Activated CD4-positive, alpha-beta T cell treated with anti-CD3 and anti-CD28 coated beads, Interleukin-2, amount 10 ng/mL, durations not matched to agents 24 days and 14 days (primary cell): ENCODE measurements at regions of chr11 and their contacts with region 1.

Region 1: DNA sequence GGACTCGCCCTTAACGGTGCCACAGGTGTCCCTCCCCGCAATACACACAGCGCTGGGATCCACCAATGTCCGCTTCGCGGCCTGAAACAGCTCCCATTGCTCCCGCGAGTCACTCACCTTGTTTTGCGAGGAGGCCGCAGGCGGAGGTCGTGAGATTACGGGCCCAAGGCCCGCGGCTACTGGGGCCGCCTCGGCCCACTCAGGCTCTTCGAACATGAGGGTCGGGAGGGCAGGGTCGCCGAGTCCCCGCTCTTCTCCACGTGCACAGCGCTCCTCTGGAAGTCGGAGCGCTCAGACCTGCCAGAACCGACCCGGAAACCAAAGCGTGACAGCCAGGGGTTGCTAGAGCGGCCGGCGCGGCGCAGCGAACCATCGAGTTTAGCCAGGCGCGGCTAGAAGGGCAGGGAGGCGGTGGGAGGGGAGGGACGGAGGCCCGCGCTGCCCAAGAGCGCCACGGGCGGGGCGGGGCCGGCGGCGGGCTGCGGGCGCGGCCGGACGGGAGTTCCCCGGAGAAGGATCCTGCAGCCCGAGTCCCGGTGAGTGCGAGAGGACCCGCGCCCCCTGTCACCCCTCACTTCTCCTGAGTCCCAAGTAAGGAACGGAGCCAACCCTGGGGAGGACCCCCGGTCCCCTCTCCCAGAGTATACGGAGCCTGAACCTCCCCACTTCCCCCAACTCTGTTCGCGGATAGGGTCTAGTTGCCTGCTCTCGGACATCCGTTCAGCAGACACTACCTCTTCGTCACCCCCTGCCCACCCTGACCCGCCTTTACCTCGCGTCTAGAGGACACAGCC is at the starts of genes ILK and RRP8:
- DNase-seq: peak; percentile 96
- H3K4me3 Mint-ChIP-seq: no peak within 1 kb of the TSS
- H3K27ac Mint-ChIP-seq: no peak within 1 kb of the TSS
- H3K4me1 Mint-ChIP-seq: peaks cover 28% of the 10 kb centered on the region
- H3K27me3 Mint-ChIP-seq: no peaks in the 10 kb centered on the region
- total RNA-seq, gene ILK: 89.6 and 92.4 TPM in 2 replicates
- total RNA-seq, gene RRP8: 41.5 and 43.8 TPM in 2 replicates

Region 2: DNA sequence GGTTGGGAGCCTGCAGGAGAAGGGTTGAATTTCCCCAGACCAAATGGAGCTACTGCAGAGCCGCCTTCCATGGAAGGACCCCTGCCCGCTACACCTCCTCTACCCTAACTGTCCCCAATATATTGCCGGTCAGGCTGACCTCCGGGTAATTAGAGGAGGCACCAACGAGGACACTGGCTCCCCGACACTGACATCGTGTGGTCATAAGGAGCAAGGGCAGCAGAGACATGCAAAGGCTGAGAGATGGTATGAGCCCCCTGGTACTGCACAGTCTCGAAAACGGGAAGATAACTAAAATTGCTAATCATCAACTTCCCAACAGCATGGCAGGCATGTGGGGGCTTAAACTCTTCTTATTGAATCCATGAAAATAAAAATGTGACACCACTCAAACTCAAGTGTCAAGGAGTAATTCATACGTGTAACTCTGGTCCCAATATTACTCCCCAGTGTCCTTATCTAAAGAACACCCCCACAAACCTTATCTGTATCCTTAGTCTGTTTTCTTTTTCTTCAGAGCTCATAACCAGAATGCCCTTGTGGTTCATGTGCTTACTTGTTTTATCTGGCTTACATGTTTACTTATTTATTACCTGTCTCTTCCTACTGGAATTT is 287.6 kb before region 1 on chr11:
- intact Hi-C with region 1: loop called (anchors 2 kb)
- DNase-seq: peak; percentile 80
- H3K4me3 Mint-ChIP-seq: no peak overlapping the region
- H3K27ac Mint-ChIP-seq: no peak overlapping the region
- H3K4me1 Mint-ChIP-seq: peaks cover 25% of the 10 kb centered on the region
- H3K27me3 Mint-ChIP-seq: peaks cover 47% of the 10 kb centered on the region

Region 3: DNA sequence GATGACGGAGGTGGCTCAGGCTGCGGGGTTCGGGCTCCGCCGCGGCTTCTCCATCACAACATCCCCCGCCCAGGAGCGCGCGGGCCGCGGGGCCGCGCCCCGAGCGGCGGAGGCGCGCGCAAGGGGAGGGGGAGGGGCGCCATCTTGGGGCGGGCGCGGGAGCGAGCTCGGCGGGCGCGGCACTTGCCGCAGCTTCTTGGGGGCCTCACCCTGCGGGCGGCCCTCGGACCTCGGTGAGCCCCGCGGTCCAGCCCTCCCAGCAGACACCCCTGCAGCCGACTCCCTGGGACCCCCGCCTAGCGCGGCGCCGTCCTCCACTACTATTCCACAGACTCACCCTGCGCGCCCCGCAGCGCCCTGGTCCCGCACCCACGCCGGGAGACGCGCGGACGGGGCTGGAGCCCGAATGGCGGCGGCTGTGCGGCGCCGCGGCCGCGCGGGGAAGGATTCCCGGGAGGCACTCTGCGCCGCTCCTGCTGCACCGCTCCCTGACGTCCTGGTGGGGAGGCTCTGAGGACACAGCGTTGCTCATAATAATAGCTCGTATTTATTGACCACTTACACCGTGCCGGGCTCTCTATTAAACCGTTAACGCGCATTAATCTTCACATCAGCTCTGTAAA is 184.4 kb before region 1 on chr11 and contains the start of gene APBB1:
- intact Hi-C with region 1: loop called (anchors 10 kb)
- DNase-seq: peak; percentile 93
- H3K4me3 Mint-ChIP-seq: no peak within 1 kb of the TSS
- H3K27ac Mint-ChIP-seq: peak within 1 kb of the TSS; percentile 45
- H3K4me1 Mint-ChIP-seq: peaks cover 3% of the 10 kb centered on the region
- H3K27me3 Mint-ChIP-seq: peaks cover 33% of the 10 kb centered on the region
- total RNA-seq, gene APBB1: 24.1 TPM in 2 replicates

Region 4: GRCh38 chr11:6523253-6523652 is 80.2 kb before region 1 on chr11:
- intact Hi-C with region 1: loop called (anchors 2 kb)
- DNase-seq: no peak
- H3K4me3 Mint-ChIP-seq: no peak overlapping the region
- H3K27ac Mint-ChIP-seq: peak overlapping the region; percentile 14
- H3K4me1 Mint-ChIP-seq: peaks cover 33% of the 10 kb centered on the region
- H3K27me3 Mint-ChIP-seq: no peaks in the 10 kb centered on the region

Region 5: GRCh38 chr11:6667733-6668374 is 64.4 kb after region 1 on chr11:
- intact Hi-C with region 1: loop called (anchors 1 kb)
- DNase-seq: peak; percentile 84
- H3K4me3 Mint-ChIP-seq: no peak overlapping the region
- H3K27ac Mint-ChIP-seq: peak overlapping the region; percentile 29
- H3K4me1 Mint-ChIP-seq: peaks cover 50% of the 10 kb centered on the region
- H3K27me3 Mint-ChIP-seq: peaks cover 4% of the 10 kb centered on the region

Region 6: GRCh38 chr11:6737872-6738466 is 134.5 kb after region 1 on chr11:
- intact Hi-C with region 1: loop called (anchors 2 kb)
- DNase-seq: peak; percentile 91
- H3K4me3 Mint-ChIP-seq: no peak overlapping the region
- H3K27ac Mint-ChIP-seq: peak overlapping the region; percentile 45
- H3K4me1 Mint-ChIP-seq: peaks cover 80% of the 10 kb centered on the region
- H3K27me3 Mint-ChIP-seq: no peaks in the 10 kb centered on the region